Activated B cell treated with CpG ODN at 0.5 μM for 24 hours (primary cell): ENCODE measurements at regions of chr11 and their contacts with region 1.

Region 1: DNA sequence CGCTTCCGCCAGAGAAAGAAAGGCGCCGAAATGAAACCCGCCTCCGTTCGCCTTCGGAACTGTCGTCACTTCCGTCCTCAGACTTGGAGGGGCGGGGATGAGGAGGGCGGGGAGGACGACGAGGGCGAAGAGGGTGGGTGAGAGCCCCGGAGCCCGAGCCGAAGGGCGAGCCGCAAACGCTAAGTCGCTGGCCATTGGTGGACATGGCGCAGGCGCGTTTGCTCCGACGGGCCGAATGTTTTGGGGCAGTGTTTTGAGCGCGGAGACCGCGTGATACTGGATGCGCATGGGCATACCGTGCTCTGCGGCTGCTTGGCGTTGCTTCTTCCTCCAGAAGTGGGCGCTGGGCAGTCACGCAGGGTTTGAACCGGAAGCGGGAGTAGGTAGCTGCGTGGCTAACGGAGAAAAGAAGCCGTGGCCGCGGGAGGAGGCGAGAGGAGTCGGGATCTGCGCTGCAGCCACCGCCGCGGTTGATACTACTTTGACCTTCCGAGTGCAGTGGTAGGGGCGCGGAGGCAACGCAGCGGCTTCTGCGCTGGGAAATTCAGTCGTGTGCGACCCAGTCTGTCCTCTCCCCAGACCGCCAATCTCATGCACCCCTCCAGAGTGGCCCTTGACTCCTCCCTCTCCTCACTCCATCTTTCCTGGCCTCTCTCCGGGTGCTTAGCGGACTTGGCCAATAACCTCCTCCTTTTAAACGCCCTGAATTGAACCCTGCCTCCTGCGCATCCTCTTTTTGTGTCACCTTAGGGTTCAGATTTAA is at the start of gene ATM:
- DNase-seq: peak; percentile 94
- ATAC-seq: peak; percentile 82
- H3K4me3 Mint-ChIP-seq: no peak within 1 kb of the TSS
- H3K27ac Mint-ChIP-seq: no peak within 1 kb of the TSS
- H3K4me1 Mint-ChIP-seq: peaks cover 51% of the 10 kb centered on the region
- H3K27me3 Mint-ChIP-seq: no peaks in the 10 kb centered on the region
- CTCF ChIP-seq: no peak
- total RNA-seq, gene ATM: 164 and 184 TPM in 2 replicates

Region 2: DNA sequence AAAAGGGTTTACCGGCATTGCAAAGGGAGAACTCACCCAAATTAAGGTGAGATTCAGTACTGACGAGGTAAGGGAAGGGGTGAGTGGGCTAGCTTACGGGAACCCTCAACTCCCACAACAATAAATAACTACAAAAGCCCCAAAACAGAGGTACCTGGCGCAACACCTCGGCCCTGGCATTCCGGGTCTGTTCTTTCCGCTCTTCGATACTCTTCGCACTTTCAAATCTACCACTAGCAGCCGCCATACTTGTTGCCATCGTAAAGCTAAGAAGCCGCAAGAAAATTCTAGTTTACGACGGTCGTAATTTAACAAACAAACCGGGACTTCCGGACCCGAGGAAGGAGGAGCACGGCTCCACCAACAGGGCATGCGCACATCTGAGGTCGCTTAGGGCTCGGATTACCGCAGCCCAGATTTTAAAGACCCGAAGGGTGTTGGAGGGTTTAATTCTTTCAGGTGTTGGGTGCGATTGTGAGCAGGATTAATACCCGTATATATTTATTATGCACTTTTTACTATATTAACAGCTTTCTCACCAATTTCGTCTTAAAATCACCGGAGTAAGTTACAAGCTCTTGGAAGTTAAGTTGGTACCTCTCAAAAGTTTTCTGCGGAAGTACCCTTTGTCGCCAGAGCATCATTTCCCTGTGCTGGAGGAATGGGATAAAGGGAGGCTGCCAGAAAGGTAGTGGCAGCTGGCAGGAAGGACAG is 765.2 kb before region 1 on chr11 and contains the start of gene CWF19L2:
- CTCF ChIA-PET with region 1: no interaction called
- POLR2A ChIA-PET with region 1: no interaction called
- intact Hi-C with region 1: loop called (anchors 5 kb)
- DNase-seq: peak; percentile 67
- ATAC-seq: peak; percentile 96
- H3K4me3 Mint-ChIP-seq: peak within 1 kb of the TSS; percentile 90
- H3K27ac Mint-ChIP-seq: peak within 1 kb of the TSS; percentile 93
- H3K4me1 Mint-ChIP-seq: peaks cover 25% of the 10 kb centered on the region
- H3K27me3 Mint-ChIP-seq: peaks cover 3% of the 10 kb centered on the region
- CTCF ChIP-seq: no peak
- total RNA-seq, gene CWF19L2: 24.5 and 26.1 TPM in 2 replicates

Region 3: DNA sequence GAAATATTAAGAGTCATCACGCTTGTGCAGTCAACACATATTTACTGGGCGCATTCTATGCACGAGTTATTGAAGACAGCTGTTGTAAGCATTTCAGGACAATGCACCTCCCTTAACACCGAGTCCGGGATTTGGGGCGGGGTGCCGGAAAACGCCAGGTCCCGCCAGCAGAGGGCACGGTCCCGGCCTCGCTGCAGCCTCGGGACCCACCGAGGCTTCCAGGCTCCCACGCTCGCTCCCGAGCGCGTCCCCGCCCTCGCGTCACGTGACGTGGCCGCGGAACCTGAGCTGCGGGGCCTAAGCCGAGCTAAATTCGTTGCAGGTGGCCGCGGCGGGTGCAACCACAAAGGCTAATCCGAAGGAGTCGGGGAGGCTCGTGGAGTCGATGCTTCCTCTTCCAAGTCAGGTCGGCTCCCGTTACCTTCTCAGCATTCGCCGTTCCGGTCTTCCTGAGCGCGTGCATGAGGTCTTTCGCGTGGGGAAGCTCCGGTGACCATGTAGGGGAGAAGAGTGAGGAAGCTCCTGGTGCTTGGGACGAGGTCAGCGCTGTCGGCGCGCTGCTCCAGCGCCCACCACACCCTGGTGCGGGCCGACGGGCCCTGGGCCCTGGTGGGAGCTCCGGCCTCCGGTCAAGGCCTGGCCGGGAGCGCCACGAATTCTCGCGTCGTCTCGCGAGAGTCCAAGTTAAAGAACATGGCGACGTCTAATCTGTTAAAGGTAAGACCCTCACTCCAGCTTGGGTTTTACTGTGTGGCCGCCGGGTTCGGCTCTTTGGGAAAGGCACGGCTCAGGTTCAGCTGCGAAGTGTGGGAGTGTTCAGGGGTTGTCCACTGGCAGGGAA is 214.0 kb before region 1 on chr11 and contains the start of gene CUL5:
- CTCF ChIA-PET with region 1: interaction called, 3 read pairs
- POLR2A ChIA-PET with region 1: interaction called, 9 read pairs
- intact Hi-C with region 1: loop called (anchors 2 kb)
- DNase-seq: peak; percentile 89
- ATAC-seq: peak; percentile 87
- H3K4me3 Mint-ChIP-seq: peak within 1 kb of the TSS; percentile 99
- H3K27ac Mint-ChIP-seq: peak within 1 kb of the TSS; percentile 96
- H3K4me1 Mint-ChIP-seq: peaks cover 10% of the 10 kb centered on the region
- H3K27me3 Mint-ChIP-seq: no peaks in the 10 kb centered on the region
- CTCF ChIP-seq: no peak
- total RNA-seq, gene CUL5: 38.4 and 42.0 TPM in 2 replicates

Region 4: GRCh38 chr11:108199446-108200321 is 23.2 kb before region 1 on chr11:
- CTCF ChIA-PET with region 1: no interaction called
- POLR2A ChIA-PET with region 1: interaction called, 19 read pairs
- intact Hi-C with region 1: loop called (anchors 1 kb)
- DNase-seq: no peak
- ATAC-seq: peak; percentile 91
- H3K4me3 Mint-ChIP-seq: peak overlapping the region; percentile 9
- H3K27ac Mint-ChIP-seq: peak overlapping the region; percentile 69
- H3K4me1 Mint-ChIP-seq: peaks cover 74% of the 10 kb centered on the region
- H3K27me3 Mint-ChIP-seq: no peaks in the 10 kb centered on the region
- CTCF ChIP-seq: no peak

Region 5: DNA sequence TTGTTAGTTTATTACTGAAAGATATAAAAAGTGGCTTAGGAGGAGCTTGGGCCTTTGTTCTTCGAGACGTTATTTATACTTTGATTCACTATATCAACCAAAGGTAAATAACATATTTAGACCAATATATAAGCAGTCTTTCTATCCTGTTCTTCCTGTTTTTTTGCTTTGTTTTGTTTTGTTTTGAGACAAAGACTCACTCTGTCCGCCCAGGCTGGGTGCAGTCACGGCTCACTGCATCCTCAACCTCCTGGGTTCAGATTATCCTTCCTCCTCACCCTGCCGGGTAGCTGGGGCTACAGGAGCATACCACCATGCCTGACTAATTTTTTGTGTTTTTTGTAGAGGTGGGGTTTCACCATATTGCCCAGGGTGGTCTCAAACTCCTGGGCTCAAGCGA is 66.8 kb after region 1 on chr11:
- CTCF ChIA-PET with region 1: interaction called, 5 read pairs
- POLR2A ChIA-PET with region 1: interaction called, 20 read pairs
- intact Hi-C with region 1: loop called (anchors 2 kb)
- DNase-seq: no peak
- ATAC-seq: peak; percentile 79
- H3K4me3 Mint-ChIP-seq: no peak overlapping the region
- H3K27ac Mint-ChIP-seq: peak overlapping the region; percentile 82
- H3K4me1 Mint-ChIP-seq: peaks cover 9% of the 10 kb centered on the region
- H3K27me3 Mint-ChIP-seq: no peaks in the 10 kb centered on the region
- CTCF ChIP-seq: no peak

Region 6: DNA sequence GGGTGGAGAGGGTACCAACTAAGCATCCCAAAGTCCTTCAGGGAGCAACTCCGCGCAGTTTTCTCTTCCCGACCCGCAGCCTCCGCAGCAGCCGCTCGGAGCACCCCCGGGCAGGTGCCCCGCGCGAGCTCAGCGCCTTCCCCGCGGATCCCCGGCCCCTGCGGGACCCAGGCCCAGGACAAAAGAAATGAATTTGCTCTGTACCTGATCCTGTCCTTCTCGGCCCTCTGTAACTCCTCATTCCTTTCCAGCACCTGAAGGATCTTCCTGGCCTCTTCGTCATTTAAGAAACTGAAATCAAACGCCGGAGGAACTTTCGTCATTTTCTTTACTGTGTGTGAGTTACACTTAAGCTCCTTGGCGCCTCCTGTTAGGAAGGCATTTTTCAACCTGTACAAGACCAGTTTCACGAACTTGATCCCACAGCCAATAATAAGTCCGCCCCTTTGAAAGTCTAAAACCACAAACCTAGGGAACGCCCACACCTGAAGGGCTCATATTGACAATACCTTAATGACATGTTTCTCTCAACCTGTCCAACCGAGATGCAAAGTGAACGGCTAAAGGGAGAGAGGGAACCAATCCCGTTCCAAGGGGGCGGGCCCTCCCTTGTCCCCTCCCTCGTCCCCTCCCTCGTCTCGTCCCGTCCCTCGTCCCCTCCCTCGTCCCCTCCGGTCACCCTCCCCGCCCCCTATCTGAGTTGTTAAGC is 370.5 kb after region 1 on chr11 and contains the start of gene EXPH5:
- CTCF ChIA-PET with region 1: no interaction called
- POLR2A ChIA-PET with region 1: no interaction called
- intact Hi-C with region 1: loop called (anchors 1 kb)
- DNase-seq: peak; percentile 47
- ATAC-seq: peak; percentile 96
- H3K4me3 Mint-ChIP-seq: peak within 1 kb of the TSS; percentile 93
- H3K27ac Mint-ChIP-seq: peak within 1 kb of the TSS; percentile 55
- H3K4me1 Mint-ChIP-seq: peaks cover 14% of the 10 kb centered on the region
- H3K27me3 Mint-ChIP-seq: peaks cover 42% of the 10 kb centered on the region
- CTCF ChIP-seq: no peak
- total RNA-seq, gene EXPH5: 0.27 and 0.29 TPM in 2 replicates